Activated CD4-positive, alpha-beta T cell treated with anti-CD3 and anti-CD28 coated beads, Interleukin-2, amount 10 ng/mL, durations not matched to agents 24 days and 14 days (primary cell): ENCODE measurements at regions of chr3 and their contacts with region 1.

Region 1: DNA sequence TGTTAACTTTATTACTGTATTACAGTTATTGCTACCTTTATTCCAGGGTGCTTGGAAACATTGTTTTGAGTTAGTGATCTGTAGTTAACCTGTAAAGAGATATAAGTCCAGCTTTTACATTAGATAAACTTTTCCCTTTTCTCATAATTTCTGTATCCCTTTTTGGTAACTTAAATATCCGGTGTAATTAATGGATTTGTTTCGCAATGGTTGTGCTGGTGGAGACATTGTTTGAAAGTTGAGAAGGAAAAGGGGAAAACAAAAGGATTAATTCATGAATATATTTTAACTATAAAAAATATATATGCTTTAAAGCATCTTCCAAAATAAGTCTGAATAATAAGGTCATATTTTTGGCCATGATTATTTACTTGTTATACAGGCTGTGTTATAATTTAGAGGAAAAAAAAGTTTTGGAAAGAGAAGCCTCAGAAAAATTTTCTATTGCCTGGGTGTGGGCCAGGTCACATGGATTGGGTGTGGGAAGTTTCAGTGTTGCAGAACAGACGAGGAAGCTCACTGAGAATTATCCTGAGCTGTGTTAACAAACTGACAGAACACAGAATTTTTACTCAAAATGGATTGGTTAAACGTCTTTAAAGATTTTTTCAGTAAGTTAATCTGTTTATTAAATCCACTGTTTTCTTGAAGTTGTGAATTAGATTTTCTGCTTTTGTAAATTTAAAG is 27.7 kb upstream of the IL20RB start:
- DNase-seq: no peak
- H3K4me3 Mint-ChIP-seq: no peak overlapping the region
- H3K27ac Mint-ChIP-seq: no peak overlapping the region
- H3K4me1 Mint-ChIP-seq: peaks cover 40% of the 10 kb centered on the region
- H3K27me3 Mint-ChIP-seq: no peaks in the 10 kb centered on the region

Region 2: DNA sequence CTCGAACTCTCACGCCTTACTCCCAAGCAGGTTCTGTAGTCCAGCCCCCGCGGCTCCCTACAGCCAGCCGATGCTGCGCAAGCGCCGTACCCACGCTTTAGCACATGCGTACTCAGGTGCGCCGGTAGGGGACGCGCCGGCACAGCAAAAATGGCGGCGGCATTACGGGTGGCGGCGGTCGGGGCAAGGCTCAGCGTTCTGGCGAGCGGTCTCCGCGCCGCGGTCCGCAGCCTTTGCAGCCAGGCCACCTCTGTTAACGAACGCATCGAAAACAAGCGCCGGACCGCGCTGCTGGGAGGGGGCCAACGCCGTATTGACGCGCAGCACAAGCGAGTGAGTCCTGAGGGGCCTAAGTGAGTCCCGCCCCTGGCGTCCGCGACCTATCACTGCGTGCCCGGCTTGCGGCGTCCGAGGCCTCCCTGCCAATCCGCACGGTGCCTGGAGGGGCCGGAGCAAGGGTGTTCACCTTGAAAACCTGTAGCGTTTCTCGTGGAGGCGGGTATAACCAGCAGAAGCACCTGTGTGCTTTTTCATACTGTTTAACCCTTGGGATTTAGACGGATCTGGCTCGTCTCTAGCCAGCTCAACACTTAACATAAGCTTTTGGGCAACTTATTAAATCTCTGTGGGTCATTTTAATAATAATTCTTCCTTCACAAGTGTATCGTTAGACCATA is 679.8 kb before region 1 on chr3 and contains the start of gene PCCB:
- intact Hi-C with region 1: no loop called
- DNase-seq: peak; percentile 97
- H3K4me3 Mint-ChIP-seq: peak within 1 kb of the TSS; percentile 91
- H3K27ac Mint-ChIP-seq: peak within 1 kb of the TSS; percentile 95
- H3K4me1 Mint-ChIP-seq: peaks cover 16% of the 10 kb centered on the region
- H3K27me3 Mint-ChIP-seq: no peaks in the 10 kb centered on the region
- total RNA-seq, gene PCCB: 45.4 and 55.9 TPM in 2 replicates

Region 3: DNA sequence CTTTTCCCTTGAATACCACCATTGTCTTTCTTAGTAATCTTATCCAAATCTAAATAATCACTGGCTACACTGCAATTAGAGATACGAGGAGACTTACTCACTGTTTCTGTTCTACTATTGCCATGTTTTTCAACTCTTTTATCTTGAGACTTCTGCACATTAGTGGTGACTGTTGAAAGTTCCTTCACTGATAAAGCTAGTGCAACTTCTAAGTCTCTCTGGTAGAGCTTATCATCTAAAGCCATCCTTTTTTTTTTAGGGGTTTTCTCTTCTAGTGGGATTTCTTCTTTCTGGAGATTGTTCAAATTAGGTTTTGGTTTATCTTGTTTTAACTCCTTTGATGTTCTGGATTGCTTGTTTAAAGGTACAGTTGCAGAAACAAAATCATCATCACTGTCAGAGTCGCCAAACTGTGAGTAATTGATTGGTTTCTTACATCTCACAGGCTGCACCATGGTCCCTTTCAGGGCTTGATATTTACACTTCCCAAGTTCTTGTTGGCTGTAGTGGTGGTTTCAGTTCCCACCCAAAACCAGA is 30.4 kb before region 1 on chr3:
- intact Hi-C with region 1: loop called (anchors 5 kb)
- DNase-seq: peak; percentile 37
- H3K4me3 Mint-ChIP-seq: no peak overlapping the region
- H3K27ac Mint-ChIP-seq: peak overlapping the region; percentile 10
- H3K4me1 Mint-ChIP-seq: peaks cover 34% of the 10 kb centered on the region
- H3K27me3 Mint-ChIP-seq: no peaks in the 10 kb centered on the region

Region 4: GRCh38 chr3:136919799-136920580 is 10.1 kb before region 1 on chr3:
- intact Hi-C with region 1: loop called (anchors 2 kb)
- DNase-seq: peak; percentile 81
- H3K4me3 Mint-ChIP-seq: peak overlapping the region; percentile 51
- H3K27ac Mint-ChIP-seq: peak overlapping the region; percentile 53
- H3K4me1 Mint-ChIP-seq: peaks cover 42% of the 10 kb centered on the region
- H3K27me3 Mint-ChIP-seq: no peaks in the 10 kb centered on the region